ENCODE measurements at regions of chr3 and their contacts with region 1.

Region 1: GRCh38 chr3:171315919-171316318 is 144.3 kb downstream of the TNIK start:
- DNase-seq: no peak
- H3K4me3 ChIP-seq: no peak overlapping the region
- CTCF ChIP-seq: no peak
- POLR2A ChIP-seq: no peak

Region 2: DNA sequence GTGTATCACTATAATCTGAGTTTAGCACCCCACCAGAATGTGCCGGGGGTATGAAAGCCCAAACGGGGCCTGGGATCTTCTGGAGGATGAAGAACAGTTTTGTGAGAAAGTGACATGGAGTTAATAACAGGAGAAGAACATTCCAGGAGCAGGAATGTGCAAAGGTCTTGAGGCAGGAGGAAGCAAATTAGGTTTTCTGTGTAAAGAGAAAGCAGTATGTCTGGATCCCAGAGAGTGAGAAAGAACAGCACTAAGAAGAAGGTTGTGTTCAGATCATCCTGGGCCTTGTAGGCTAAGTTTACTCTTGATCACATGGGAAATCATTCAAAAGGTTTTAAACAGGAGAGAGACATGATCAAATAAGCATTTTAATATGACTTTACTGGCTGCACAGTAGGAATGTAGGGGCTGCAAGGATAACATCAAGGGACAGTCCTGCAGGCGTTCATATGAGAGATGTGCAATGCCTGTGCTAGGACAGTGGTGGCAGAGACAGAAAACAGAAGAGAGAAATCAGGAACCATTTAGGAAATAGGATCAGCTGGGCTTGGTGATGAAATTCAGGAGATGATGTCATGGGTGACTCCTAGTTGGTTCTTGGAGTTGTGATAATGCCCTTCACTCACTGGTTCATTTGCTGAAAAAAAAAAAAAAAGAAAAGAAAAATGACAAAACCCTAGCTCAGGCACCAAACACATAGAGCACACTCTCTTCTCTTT is 30.8 kb after region 1 on chr3:
- intact Hi-C with region 1: loop called (anchors 1 kb)
- DNase-seq: no peak
- H3K4me3 ChIP-seq: no peak overlapping the region
- CTCF ChIP-seq: no peak
- POLR2A ChIP-seq: no peak

Region 3: DNA sequence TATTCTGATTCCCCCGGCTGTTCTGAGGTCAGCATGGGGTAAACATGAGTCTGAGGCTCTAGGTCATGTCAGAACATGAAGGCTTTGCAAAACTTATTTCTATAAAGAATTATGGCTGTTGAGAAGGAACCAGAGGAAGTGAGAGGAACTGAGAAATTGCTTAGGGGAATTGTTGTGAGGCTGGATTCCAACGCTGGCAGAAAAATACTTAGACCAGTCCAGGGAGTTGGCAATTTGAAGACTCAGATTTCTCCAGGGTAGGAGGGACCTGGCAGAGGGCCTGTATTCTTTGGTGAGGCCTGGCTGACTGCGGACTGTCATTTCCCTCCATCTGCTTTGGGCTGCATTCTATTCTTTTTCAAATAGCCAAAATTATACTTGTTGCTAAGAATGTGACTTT is 338.9 kb after region 1 on chr3:
- intact Hi-C with region 1: no loop called
- DNase-seq: peak; percentile 75 to 88
- H3K4me3 ChIP-seq: no peak overlapping the region
- CTCF ChIP-seq: no peak
- POLR2A ChIP-seq: no peak

Region 4: GRCh38 chr3:172181932-172182586 is 866.1 kb after region 1 on chr3:
- intact Hi-C with region 1: no loop called
- DNase-seq: no peak
- H3K4me3 ChIP-seq: no peak overlapping the region
- CTCF ChIP-seq: no peak
- POLR2A ChIP-seq: no peak

Measured in lower leg skin (tissue), 4 donors.